ENCODE measurements at regions of chr19 and their contacts with region 1.

Region 1: DNA sequence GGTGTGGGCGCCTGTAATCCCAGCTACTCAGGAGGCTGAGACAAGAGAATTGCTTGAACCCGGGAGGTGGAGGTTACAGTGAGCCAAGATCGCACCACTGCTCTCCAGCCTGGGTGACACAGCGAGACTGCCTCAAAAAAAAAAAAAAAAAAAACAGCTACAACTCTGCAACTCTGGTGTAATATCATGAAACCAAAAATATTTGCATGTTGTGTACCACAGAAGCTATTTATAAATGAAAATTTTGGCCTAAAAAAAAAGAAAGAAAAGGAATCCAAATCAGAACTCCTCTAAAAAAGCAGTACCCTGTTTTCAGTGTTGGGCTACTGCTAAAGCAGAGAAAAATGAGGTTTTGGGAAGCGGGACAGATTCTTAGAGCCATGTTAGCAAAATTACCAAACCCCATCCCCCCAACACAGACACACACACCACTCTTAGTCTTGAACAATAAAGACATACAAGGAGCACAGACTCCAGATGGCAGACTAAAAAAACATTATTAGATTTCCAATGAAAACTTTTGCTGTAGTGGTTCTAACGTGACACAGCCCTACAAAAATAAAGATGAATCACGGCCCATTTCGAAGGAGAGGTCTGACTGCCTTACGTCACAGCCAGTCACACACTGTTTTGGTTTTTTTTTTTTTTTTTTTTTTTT is 51.5 kb downstream of the INSR start:
- DNase-seq: peak; percentile 11 to 79
- H3K4me3 ChIP-seq: no peak overlapping the region
- H3K27ac ChIP-seq: peak overlapping the region; percentile 81
- H3K4me1 ChIP-seq: peaks cover 15% of the 10 kb centered on the region
- H3K27me3 ChIP-seq: no peaks in the 10 kb centered on the region
- CTCF ChIP-seq: no peak

Region 2: DNA sequence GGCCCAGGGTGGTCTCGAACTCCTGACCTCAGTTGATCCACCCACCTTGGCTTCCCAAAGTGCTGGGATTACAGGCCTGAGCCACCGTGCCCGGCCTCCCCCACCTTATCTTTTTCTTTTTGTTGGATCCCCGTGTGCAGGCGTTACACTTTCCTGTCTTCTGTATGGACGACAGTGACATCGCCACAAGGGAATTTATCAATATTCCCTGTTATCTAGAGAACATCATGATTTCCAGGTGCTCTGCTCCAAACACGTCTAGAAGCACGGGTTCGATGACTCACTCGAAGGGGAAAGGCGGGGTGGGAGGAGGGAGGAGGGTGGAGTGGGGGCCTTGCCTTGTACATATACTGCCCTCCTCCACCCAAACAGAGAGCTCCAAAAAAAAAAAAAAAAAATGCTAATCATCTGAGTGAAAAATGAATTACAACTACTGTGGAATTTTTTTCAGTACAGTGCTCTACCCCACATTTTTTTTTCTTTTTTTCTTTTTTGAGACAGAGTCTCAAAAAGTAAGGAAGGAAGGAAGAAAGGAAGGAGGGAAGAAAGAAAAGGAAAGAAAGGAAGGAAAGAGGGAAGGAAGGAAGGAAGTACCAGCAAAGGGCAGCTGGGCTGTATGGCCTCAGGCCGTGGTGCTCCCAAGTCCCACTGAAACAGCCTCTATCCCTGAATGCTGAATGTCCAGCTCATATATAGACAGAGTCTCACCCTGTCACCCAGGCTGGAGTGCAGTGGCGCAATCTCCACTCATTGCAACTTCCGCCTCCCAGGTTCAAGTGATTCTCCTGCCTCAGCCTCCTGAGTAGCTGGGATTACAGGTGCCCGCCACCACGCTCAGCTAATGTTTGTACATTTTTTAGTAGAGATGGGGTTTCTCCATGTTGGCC is 14.7 kb after region 1 on chr19:
- CTCF ChIA-PET with region 1: no interaction called
- POLR2A ChIA-PET with region 1: interaction called, 12 read pairs
- intact Hi-C with region 1: no loop called
- DNase-seq: peak; percentile 28 to 84
- H3K4me3 ChIP-seq: no peak overlapping the region
- H3K27ac ChIP-seq: peak overlapping the region; percentile 61
- H3K4me1 ChIP-seq: peaks cover 20% of the 10 kb centered on the region
- H3K27me3 ChIP-seq: no peaks in the 10 kb centered on the region
- CTCF ChIP-seq: no peak